ENCODE measurements at regions of chr13 and their contacts with region 1.

Region 1: DNA sequence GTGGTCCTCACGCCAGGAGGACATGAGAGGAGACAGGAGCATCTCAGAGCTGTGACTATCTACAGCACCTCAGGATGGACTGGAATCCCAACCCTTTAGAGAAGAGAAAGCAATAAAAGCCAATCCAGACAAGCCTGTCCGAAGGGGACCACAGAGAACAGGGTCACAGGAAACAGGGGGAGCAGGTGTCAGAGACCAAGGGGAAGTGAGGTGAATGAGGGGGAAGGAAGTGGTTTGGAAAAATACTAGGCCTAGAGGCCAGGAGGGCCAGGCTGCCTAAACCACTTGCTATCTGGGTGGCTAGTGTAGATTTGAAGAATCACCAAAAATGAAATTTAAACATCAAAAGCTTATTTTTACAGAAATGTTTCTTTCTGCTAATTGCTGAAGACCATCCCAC is 16.2 kb downstream of the TMTC4 start:
- DNase-seq: no peak
- H3K4me3 ChIP-seq: no peak overlapping the region
- CTCF ChIP-seq: no peak

Region 2: GRCh38 chr13:100594731-100595130 is 63.6 kb before region 1 on chr13:
- in situ Hi-C with region 1: loop called (anchors 5 kb)
- DNase-seq: no peak
- H3K4me3 ChIP-seq: no peak overlapping the region
- CTCF ChIP-seq: peak; percentile 25

Region 3: GRCh38 chr13:100738176-100738855 is 80.0 kb after region 1 on chr13:
- in situ Hi-C with region 1: no loop called
- DNase-seq: no peak
- H3K4me3 ChIP-seq: no peak overlapping the region
- CTCF ChIP-seq: no peak

Region 4: GRCh38 chr13:100957741-100958140 is 299.4 kb after region 1 on chr13:
- in situ Hi-C with region 1: no loop called
- DNase-seq: no peak
- H3K4me3 ChIP-seq: no peak overlapping the region
- CTCF ChIP-seq: no peak

Measured in astrocyte of the cerebellum (primary cell).